ENCODE measurements at regions of chr9 and their contacts with region 1.

Region 1: GRCh38 chr9:112793213-112793810 is 42.8 kb downstream of the SNX30 start:
- DNase-seq: peak; percentile 93
- H3K4me3 Mint-ChIP-seq: no peak overlapping the region
- H3K27ac Mint-ChIP-seq: no peak overlapping the region
- H3K4me1 Mint-ChIP-seq: peaks cover 7% of the 10 kb centered on the region
- H3K27me3 Mint-ChIP-seq: no peaks in the 10 kb centered on the region

Region 2: DNA sequence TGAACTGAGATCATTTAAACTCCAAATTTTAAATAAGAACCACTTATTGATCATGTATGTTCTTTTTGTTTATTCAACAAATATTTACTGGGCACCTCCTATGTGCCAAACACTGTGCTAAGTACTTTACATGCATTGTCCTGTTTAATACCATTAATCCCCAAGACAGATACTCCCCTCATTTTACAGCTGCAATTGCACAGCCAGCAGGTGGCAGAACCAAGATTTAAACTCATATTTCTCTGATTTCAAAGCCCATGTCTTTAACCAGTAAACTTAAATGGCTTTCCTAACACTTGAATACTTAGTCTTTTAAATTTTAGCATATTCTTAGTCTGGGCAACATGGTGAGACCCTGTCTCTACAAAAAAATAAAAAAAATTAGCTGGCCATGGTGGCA is 350.1 kb before region 1 on chr9:
- CTCF ChIA-PET with region 1: interaction called, 12 read pairs
- intact Hi-C with region 1: loop called (anchors 1 kb)
- DNase-seq: peak; percentile 47
- H3K4me3 Mint-ChIP-seq: no peak overlapping the region
- H3K27ac Mint-ChIP-seq: no peak overlapping the region
- H3K4me1 Mint-ChIP-seq: no peaks in the 10 kb centered on the region
- H3K27me3 Mint-ChIP-seq: no peaks in the 10 kb centered on the region

Region 3: GRCh38 chr9:112599732-112600131 is 193.6 kb before region 1 on chr9:
- CTCF ChIA-PET with region 1: no interaction called
- intact Hi-C with region 1: loop called (anchors 10 kb)
- DNase-seq: no peak
- H3K4me3 Mint-ChIP-seq: no peak overlapping the region
- H3K27ac Mint-ChIP-seq: no peak overlapping the region
- H3K4me1 Mint-ChIP-seq: peaks cover 2% of the 10 kb centered on the region
- H3K27me3 Mint-ChIP-seq: no peaks in the 10 kb centered on the region

Region 4: DNA sequence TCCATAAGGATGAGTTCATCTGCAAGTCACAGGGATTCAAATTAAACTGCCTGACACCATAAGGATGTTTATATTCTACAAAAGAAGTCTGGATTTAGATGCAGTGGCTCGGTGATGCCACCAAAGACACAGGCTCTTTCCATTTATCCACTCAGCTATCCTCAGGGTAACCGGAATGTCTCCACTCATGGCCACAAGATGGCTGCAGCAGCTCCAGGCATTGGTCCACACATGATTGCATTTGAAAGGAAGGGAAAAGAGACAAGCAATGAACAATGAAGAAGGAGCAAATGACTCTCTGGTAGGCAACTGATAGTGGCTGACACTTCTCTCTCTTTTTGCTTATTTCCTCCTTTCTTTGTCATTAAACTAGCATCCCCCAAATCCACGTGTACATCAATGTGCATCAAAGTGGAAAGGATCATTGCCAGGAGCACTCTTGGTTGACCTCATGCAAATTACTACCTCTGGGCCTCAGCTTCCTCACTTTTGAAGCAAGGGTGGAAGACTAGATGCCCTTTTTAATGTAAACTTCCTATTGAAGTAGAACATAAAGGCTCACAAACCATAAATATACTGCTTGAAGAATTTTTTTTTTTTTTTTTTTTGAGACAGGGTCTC is 50.0 kb before region 1 on chr9:
- CTCF ChIA-PET with region 1: interaction called, 12 read pairs
- intact Hi-C with region 1: loop called (anchors 1 kb)
- DNase-seq: no peak
- H3K4me3 Mint-ChIP-seq: no peak overlapping the region
- H3K27ac Mint-ChIP-seq: no peak overlapping the region
- H3K4me1 Mint-ChIP-seq: peaks cover 16% of the 10 kb centered on the region
- H3K27me3 Mint-ChIP-seq: peaks cover 1% of the 10 kb centered on the region

Measured in activated naive CD4-positive, alpha-beta T cell treated with anti-CD3 and anti-CD28 coated beads for 36 hours (primary cell).